Heart left ventricle (tissue), 16 donors: ENCODE measurements at regions of chr20 and their contacts with region 1.

Region 1: DNA sequence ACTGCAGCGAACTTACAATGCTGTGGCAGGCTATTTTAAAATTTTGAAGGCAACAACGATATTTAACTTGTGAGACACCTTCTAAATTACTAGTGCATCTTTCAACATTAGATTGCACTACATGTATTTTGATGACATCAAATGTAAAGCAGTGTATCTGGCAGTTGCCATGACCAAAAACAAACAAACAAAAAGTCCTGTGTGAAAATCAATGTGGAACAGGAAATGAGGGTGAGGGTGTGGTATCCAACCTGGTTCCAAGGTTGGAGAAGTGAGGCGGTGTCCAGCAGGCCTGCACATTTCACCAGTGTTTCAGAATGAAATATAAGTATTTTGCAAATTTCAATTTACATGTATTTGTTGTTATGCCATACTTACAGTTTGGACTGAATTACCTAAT is 112.0 kb downstream of the LAMP5 start:
- DNase-seq: no peak
- ATAC-seq: no peak
- H3K4me3 ChIP-seq: no peak overlapping the region
- H3K27ac ChIP-seq: no peak overlapping the region
- H3K4me1 ChIP-seq: no peaks in the 10 kb centered on the region
- H3K27me3 ChIP-seq: peaks cover 0 to 12% (median 0%) of the 10 kb centered on the region in 9 donors
- CTCF ChIP-seq: no peak
- POLR2A ChIP-seq: no peak

Region 2: GRCh38 chr20:9689041-9689440 is 62.7 kb after region 1 on chr20:
- intact Hi-C with region 1: loop called in 1 of 10 experiments (anchors 10 kb)
- DNase-seq: no peak
- ATAC-seq: no peak
- H3K4me3 ChIP-seq: no peak overlapping the region
- H3K27ac ChIP-seq: no peak overlapping the region
- H3K4me1 ChIP-seq: no peaks in the 10 kb centered on the region
- H3K27me3 ChIP-seq: peaks cover 0 to 5% (median 0%) of the 10 kb centered on the region in 9 donors
- CTCF ChIP-seq: no peak
- POLR2A ChIP-seq: no peak